Calu3 (cell line): ENCODE measurements at regions of chr10 and their contacts with region 1.

Region 1: DNA sequence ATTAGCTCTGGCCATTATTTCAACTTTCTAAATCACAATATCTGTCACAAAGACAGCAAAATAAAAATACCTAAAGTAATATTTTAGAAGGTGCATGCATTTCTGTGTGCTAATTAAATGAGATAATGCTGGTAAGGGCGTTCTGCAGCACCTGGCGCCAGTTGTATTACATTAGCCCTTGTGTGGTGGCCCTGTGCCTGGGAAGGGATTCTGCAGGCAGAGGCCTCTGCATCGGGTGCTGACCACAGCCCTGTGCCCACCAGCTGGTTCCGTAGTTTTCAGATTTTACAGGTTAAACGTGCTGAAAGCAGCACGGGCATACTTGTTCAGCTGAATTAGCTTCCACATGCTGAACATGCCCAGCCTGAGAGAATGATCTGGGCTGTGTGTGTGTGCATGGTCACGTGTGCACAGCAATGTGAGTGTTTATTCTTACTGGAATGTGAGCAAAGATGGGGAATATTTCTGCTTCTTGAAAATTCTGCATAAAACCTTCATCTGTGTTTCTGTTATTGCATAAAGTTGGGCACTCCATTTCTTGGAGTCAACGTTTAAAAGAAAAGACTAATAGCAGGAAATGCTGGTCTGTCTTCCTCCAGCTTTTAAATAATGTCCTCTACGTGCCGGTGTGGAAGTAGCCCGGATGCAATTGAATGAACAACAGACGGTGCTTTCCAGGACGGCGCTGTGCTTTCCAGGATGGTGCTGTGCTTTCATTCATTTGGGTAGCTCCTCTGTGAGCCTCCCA is 157.9 kb upstream of the PRKCQ start:
- DNase-seq: peak; percentile 39
- H3K4me3 Mint-ChIP-seq: peak overlapping the region; percentile 79
- H3K27ac Mint-ChIP-seq: peak overlapping the region; percentile 74
- H3K4me1 Mint-ChIP-seq: peaks cover 63% of the 10 kb centered on the region
- H3K27me3 Mint-ChIP-seq: no peaks in the 10 kb centered on the region
- CTCF ChIP-seq: no peak

Region 2: GRCh38 chr10:6416892-6417512 is 320.9 kb before region 1 on chr10:
- CTCF ChIA-PET with region 1: no interaction called
- intact Hi-C with region 1: loop called (anchors 10 kb)
- DNase-seq: peak; percentile 27
- H3K4me3 Mint-ChIP-seq: no peak overlapping the region
- H3K27ac Mint-ChIP-seq: no peak overlapping the region
- H3K4me1 Mint-ChIP-seq: no peaks in the 10 kb centered on the region
- H3K27me3 Mint-ChIP-seq: peaks cover 15% of the 10 kb centered on the region
- CTCF ChIP-seq: peak; percentile 31

Region 3: DNA sequence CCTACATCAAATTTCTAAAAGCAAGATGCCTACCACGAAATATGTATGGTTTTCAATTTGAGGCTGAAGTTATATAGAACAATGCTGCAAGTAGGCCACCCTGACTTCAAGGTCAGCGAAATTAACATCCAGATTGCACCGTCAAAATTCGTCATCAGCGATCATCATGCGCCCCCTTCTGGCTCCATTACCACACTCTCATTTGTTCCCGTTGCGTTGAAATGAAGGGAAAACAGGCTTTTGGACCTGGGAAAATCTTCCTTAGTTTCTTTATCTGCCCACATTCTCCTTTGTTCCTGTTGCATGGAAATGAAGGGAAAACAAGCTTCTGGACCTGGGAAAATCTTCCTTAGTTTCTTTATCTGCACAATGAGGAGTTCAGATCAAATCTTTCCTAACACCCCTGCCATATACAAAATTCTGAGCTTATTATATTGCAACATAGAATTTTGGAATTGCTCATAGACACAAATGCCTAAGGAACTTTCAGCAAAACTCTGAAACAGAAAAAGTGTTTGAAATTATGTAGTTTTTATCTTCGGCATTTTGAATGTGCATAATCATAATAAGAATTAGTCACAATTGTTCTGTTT is 59.6 kb before region 1 on chr10:
- CTCF ChIA-PET with region 1: no interaction called
- intact Hi-C with region 1: loop called (anchors 5 kb)
- DNase-seq: peak; percentile 66
- H3K4me3 Mint-ChIP-seq: no peak overlapping the region
- H3K27ac Mint-ChIP-seq: no peak overlapping the region
- H3K4me1 Mint-ChIP-seq: peaks cover 10% of the 10 kb centered on the region
- H3K27me3 Mint-ChIP-seq: no peaks in the 10 kb centered on the region
- CTCF ChIP-seq: peak; percentile 89

Region 4: GRCh38 chr10:6721480-6721879 is 16.5 kb before region 1 on chr10:
- CTCF ChIA-PET with region 1: interaction called, 12 read pairs
- intact Hi-C with region 1: loop called (anchors 2 kb)
- DNase-seq: peak; percentile 37
- H3K4me3 Mint-ChIP-seq: peak overlapping the region; percentile 43
- H3K27ac Mint-ChIP-seq: peak overlapping the region; percentile 95
- H3K4me1 Mint-ChIP-seq: peaks cover 57% of the 10 kb centered on the region
- H3K27me3 Mint-ChIP-seq: no peaks in the 10 kb centered on the region
- CTCF ChIP-seq: no peak